ENCODE measurements at regions of chr1 and their contacts with region 1.

Region 1: DNA sequence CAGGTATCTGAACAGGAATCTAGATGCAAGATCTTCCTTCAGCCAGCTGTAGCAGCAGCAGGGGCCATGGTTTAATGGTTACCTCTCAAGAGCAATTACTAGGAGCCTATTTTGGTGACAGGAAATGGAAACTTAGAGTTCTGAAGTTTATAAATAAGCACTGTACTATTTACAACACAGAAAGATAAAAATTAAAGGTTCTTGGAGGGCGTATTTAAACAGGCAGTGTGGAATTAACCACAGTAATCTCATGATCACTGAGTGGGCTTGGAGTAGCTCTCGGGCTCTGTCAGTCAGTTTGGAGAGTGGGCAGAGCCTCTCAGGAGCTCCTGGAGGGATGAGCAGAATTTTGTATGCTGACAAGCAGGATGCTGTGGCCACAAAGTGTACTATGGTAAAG is 10.2 kb upstream of the FCRL5 start:
- DNase-seq: no peak
- ATAC-seq: peak; percentile 19
- H3K4me3 ChIP-seq: peak overlapping the region in 3 of 5 experiments; percentile 13 to 22 (median 18)
- H3K4me3 Mint-ChIP-seq: peak overlapping the region; percentile 68
- H3K27ac ChIP-seq: peak overlapping the region in 1 of 2 donors; percentile 15
- H3K27ac Mint-ChIP-seq: peak overlapping the region; percentile 51
- H3K4me1 ChIP-seq: peaks cover 64 to 65% of the 10 kb centered on the region in 2 donors
- H3K4me1 Mint-ChIP-seq: peaks cover 58% of the 10 kb centered on the region
- H3K27me3 ChIP-seq: no peaks in the 10 kb centered on the region
- H3K27me3 Mint-ChIP-seq: no peaks in the 10 kb centered on the region
- CTCF ChIP-seq: no peak

Region 2: GRCh38 chr1:157512036-157512969 is 50.2 kb before region 1 on chr1:
- CTCF ChIA-PET with region 1: interaction called, 4 read pairs
- POLR2A ChIA-PET with region 1: no interaction called
- intact Hi-C with region 1: loop called (anchors 2 kb)
- DNase-seq: peak; percentile 66
- ATAC-seq: peak; percentile 57
- H3K4me3 ChIP-seq: no peak overlapping the region
- H3K4me3 Mint-ChIP-seq: peak overlapping the region; percentile 52
- H3K27ac ChIP-seq: peak overlapping the region in 1 of 2 donors; percentile 10
- H3K27ac Mint-ChIP-seq: peak overlapping the region; percentile 70
- H3K4me1 ChIP-seq: peaks cover 41 to 50% of the 10 kb centered on the region in 2 donors
- H3K4me1 Mint-ChIP-seq: peaks cover 59% of the 10 kb centered on the region
- H3K27me3 ChIP-seq: no peaks in the 10 kb centered on the region
- H3K27me3 Mint-ChIP-seq: no peaks in the 10 kb centered on the region
- CTCF ChIP-seq: no peak

Region 3: DNA sequence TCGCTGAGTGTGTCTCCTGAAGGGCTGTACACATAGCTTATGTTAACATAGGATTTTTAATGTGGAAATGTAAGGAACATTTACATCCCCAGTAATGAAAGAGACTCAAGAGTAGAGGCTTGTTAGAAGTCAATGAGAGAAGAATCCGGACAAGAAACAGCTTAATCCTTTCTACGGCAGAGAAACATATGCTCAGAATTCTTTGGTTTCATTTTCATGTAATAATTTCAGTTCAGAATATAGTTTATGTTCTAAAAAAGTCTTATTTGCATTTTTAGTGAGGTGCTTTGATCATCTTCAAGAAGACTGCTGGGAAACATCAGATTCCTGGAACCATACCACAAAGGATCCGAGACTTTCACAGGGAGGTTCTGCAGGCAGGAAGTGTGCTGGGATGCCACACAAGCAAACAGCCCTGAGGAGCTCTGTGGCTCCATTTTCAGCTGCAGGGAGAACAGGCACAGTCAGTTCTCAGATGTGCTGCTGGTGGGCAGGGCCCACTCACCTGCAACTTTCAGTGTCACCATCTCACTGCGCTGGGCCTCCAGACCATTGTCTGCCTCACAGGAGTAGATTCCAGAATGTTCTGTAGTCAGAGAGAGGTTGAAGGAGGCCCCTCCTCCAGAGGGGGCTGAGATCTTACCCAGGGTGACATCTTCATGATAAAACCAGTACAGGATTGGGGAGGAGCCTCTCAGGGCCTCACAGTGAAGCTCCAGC is 38.6 kb before region 1 on chr1:
- CTCF ChIA-PET with region 1: no interaction called
- POLR2A ChIA-PET with region 1: no interaction called
- intact Hi-C with region 1: no loop called
- DNase-seq: no peak
- ATAC-seq: no peak
- H3K4me3 ChIP-seq: no peak overlapping the region
- H3K4me3 Mint-ChIP-seq: peak overlapping the region; percentile 51
- H3K27ac ChIP-seq: peak overlapping the region in 1 of 2 donors; percentile 16
- H3K27ac Mint-ChIP-seq: peak overlapping the region; percentile 79
- H3K4me1 ChIP-seq: peaks cover 0 to 7% of the 10 kb centered on the region in 2 donors
- H3K4me1 Mint-ChIP-seq: peaks cover 17% of the 10 kb centered on the region
- H3K27me3 ChIP-seq: no peaks in the 10 kb centered on the region
- H3K27me3 Mint-ChIP-seq: no peaks in the 10 kb centered on the region
- CTCF ChIP-seq: no peak

Region 4: DNA sequence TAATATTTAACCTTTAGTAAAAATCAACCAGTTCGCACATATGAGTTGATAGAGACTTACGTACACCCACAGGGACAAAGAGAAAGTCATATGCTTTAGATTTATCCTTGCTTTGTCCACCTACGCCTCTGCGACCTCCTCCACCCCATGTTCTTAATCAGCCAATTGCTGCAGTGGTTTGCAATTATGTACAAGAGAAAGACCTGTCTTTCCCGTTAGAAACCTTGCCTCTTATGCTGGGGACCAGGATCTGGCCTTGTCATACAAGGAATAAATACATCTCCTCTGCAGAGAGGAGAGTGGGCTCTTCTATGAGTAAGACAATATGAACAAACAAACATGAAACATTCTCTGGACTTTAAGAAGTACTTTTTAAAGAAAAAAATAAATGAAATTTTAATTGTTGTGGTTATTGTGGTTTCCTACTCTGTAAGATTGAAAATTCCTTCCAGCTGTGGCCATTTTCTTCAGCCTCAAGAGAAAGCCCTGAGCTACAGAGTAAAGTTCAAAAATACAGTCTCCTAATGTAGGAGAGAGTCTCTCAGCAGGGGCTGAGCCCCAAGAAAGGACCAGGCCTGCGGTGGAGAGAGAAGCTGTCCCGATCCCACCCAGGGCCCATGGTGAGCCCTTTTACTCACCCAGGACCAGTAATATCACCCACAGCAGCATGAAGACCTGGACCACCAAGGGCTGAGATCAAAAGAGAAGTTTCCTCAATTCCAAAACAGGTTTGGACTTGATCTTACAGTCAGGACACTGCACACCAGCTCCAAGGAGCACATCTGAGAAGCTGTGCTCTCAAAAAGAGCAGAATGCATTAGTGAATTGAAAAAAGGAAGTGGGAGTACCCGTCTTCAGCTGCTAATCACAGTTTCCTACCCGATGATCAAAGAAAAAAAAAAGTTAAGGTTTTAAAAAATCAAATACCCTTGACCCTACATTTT is 10.5 kb before region 1 on chr1 and contains the start of gene FCRL5:
- CTCF ChIA-PET with region 1: interaction called, 10 read pairs
- POLR2A ChIA-PET with region 1: no interaction called
- intact Hi-C with region 1: loop called (anchors 1 kb)
- DNase-seq: peak; percentile 69
- ATAC-seq: peak; percentile 82
- H3K4me3 ChIP-seq: peak within 1 kb of the TSS; percentile 49 to 85 (median 71)
- H3K4me3 Mint-ChIP-seq: peak within 1 kb of the TSS; percentile 91
- H3K27ac ChIP-seq: peak within 1 kb of the TSS; percentile 42 to 78
- H3K27ac Mint-ChIP-seq: peak within 1 kb of the TSS; percentile 89
- H3K4me1 ChIP-seq: peaks cover 27 to 29% of the 10 kb centered on the region in 2 donors
- H3K4me1 Mint-ChIP-seq: peaks cover 63% of the 10 kb centered on the region
- H3K27me3 ChIP-seq: no peaks in the 10 kb centered on the region
- H3K27me3 Mint-ChIP-seq: no peaks in the 10 kb centered on the region
- CTCF ChIP-seq: no peak
- total RNA-seq, gene FCRL5: 34.0 and 35.0 TPM in 2 replicates

Measured in B cell (primary cell).